HCT116 (cell line): ENCODE measurements at regions of chr17 and their contacts with region 1.

Region 1: GRCh38 chr17:78250891-78251794 is 19.7 kb downstream of the TMEM235 start:
- DNase-seq: peak; percentile 71
- ATAC-seq: peak; percentile 93
- H3K4me3 ChIP-seq: peak overlapping the region; percentile 22 to 42
- H3K27ac ChIP-seq: peak overlapping the region; percentile 24; the same call in 1 of the 2 replicates
- H3K4me1 ChIP-seq: peaks cover 5 to 14% of the 10 kb centered on the region in 2 experiments
- H3K27me3 ChIP-seq: no peaks in the 10 kb centered on the region
- CTCF ChIP-seq: peak; percentile 100
- POLR2A ChIP-seq: no peak
- RAD21 ChIP-seq: peak; percentile 100

Region 2: DNA sequence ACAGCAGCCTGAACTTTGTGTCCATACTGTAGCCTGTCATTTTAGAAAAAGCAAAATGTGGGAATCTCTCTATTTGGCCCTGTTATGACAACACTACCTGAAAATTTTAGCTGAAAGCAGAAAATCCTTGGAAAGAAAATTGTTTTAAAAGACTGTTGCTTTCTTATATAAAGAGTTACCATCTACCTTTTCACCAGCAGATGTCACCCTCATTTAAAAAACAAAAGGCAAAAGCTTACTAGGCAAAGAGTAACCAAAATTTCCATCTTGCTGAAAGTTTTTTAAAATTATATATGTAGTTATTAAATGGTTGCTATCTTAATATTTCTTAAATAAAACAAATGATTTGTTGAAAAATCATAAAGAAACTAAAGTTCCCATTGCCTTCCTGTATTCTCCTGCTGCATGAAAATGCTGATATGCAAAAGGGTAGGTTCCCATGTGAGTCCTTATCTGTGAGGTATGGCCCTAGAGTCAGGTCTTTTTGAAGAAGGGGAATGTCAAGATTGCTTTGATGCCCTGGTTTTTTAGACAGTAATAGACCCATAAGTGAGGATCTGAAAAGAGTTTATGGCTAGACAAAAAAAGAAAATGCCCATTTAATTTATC is 231.7 kb before region 1 on chr17:
- CTCF ChIA-PET with region 1: interaction called, 21 read pairs
- POLR2A ChIA-PET with region 1: no interaction called
- RAD21 ChIA-PET with region 1: interaction called in 1 of 2 experiments, 5 read pairs
- intact Hi-C with region 1: no loop called
- DNase-seq: peak; percentile 33
- ATAC-seq: peak; percentile 71; the same call in 1 of the 2 replicates
- H3K4me3 ChIP-seq: no peak overlapping the region
- H3K27ac ChIP-seq: no peak overlapping the region
- H3K4me1 ChIP-seq: no peaks in the 10 kb centered on the region
- H3K27me3 ChIP-seq: no peaks in the 10 kb centered on the region
- CTCF ChIP-seq: peak; percentile 58 to 82 (median 65); a peak in 5 of 6 replicates
- POLR2A ChIP-seq: no peak
- RAD21 ChIP-seq: peak; percentile 83

Region 3: GRCh38 chr17:78112518-78113226 is 138.5 kb before region 1 on chr17:
- CTCF ChIA-PET with region 1: interaction called, 11 read pairs
- POLR2A ChIA-PET with region 1: no interaction called
- RAD21 ChIA-PET with region 1: interaction called in 1 of 2 experiments, 6 read pairs
- intact Hi-C with region 1: loop called (anchors 1 kb)
- DNase-seq: peak; percentile 33
- ATAC-seq: peak; percentile 93
- H3K4me3 ChIP-seq: no peak overlapping the region
- H3K27ac ChIP-seq: no peak overlapping the region; the same call in 1 of the 2 replicates
- H3K4me1 ChIP-seq: peaks cover 0 to 4% of the 10 kb centered on the region in 2 experiments; a peak in 1 of 4 replicates
- H3K27me3 ChIP-seq: no peaks in the 10 kb centered on the region
- CTCF ChIP-seq: peak; percentile 97 to 100 (median 100)
- POLR2A ChIP-seq: no peak
- RAD21 ChIP-seq: peak; percentile 99

Region 4: DNA sequence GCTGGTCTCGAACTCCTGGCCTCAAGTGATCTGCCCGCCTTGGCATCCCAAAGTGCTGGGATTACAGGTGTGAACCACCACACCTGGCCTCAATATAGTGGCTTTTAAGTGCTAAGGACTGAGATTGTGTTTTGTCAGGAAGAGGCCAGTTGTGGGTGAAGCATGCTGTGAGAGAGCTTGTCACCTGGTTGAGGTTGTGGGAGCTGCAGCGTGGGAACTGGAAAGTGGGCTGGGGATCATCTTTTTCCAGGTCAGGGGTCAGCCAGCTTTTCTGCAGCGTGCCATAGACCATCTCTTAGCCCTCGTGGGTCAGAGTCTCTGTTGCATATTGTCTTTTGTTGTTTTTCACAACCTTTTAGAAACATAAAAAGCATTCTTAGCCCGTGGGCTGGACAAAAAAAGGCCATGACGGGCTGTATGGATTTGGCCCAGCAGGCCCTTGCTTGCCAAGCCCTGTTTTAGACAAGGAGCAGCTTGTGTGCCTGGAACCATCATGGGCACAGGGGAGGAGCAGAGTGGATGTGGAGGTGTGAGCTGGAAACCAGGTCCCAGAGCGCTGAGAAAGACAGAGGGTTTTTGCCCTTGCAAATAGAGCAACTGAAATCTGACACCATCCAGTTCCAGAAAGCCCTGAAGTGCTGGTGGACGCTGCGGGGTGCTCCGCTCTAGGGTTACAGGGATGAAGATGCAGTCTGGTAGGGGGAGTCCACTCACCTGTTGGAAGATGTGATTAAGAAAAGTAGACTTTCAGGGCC is 31.6 kb before region 1 on chr17:
- CTCF ChIA-PET with region 1: no interaction called
- POLR2A ChIA-PET with region 1: no interaction called
- RAD21 ChIA-PET with region 1: no interaction called
- intact Hi-C with region 1: no loop called
- DNase-seq: no peak
- ATAC-seq: no peak
- H3K4me3 ChIP-seq: no peak overlapping the region
- H3K27ac ChIP-seq: no peak overlapping the region
- H3K4me1 ChIP-seq: peaks cover 8 to 11% of the 10 kb centered on the region in 2 experiments; a peak in 3 of 4 replicates
- H3K27me3 ChIP-seq: no peaks in the 10 kb centered on the region
- CTCF ChIP-seq: no peak
- POLR2A ChIP-seq: no peak
- RAD21 ChIP-seq: no peak

Region 5: GRCh38 chr17:78237401-78238012 is 13.6 kb before region 1 on chr17:
- CTCF ChIA-PET with region 1: interaction called, 11 read pairs
- POLR2A ChIA-PET with region 1: no interaction called
- RAD21 ChIA-PET with region 1: no interaction called
- intact Hi-C with region 1: no loop called
- DNase-seq: no peak
- ATAC-seq: no peak
- H3K4me3 ChIP-seq: no peak overlapping the region
- H3K27ac ChIP-seq: no peak overlapping the region
- H3K4me1 ChIP-seq: peaks cover 0 to 9% of the 10 kb centered on the region in 2 experiments; a peak in 1 of 4 replicates
- H3K27me3 ChIP-seq: no peaks in the 10 kb centered on the region
- CTCF ChIP-seq: no peak
- POLR2A ChIP-seq: no peak
- RAD21 ChIP-seq: no peak

Region 6: DNA sequence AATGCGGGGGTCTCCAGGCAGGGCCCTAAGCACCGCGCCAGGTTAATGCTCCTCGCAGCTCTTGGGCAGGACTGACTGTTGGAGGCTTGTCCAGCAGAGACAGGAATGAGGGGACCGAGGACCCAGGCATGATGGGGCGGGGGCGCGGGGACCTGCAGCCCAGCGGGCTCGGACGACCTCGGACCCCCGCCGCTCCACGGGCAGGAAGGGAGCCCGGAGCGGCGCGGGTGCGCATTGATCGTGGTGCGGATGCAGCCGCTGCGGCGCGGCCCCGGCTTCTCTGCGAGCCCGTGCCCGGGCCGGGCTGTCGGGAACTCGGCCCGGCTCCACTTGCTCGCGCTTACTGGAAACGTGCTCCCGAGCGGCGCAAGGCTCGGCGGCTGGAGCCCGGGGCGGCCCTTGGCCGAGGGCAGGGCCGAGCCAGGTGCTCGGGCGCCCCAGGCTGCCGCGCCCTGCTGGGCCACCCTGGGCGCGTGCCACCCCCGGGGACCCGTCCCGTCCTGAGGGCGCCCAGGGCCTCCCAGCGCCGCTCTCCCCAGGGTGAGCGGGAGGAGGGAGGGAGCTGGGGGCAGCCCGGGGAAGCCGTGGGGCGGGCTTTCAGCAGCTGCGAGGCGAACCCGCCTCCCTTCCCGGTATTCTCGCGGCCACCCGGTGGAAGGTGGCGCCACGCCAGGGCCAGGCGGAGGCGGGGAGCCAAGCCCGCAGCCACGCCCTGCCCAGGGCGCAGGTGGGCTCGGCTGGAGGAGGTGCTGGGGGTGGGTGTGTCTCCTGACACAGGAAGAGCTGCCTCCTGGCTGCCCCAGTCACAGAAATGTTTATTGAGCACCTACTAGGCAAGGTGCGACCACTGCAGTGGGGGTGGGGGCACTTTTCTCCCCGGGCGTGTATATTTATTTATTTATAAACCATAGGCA is 62.8 kb after region 1 on chr17:
- CTCF ChIA-PET with region 1: interaction called, 15 read pairs
- POLR2A ChIA-PET with region 1: no interaction called
- RAD21 ChIA-PET with region 1: interaction called in 1 of 2 experiments, 3 read pairs
- intact Hi-C with region 1: no loop called
- DNase-seq: peak; percentile 92
- ATAC-seq: peak; percentile 74
- H3K4me3 ChIP-seq: peak overlapping the region; percentile 32 to 57
- H3K27ac ChIP-seq: peak overlapping the region; percentile 99
- H3K4me1 ChIP-seq: peaks cover 52 to 83% of the 10 kb centered on the region in 2 experiments
- H3K27me3 ChIP-seq: no peaks in the 10 kb centered on the region
- CTCF ChIP-seq: no peak
- POLR2A ChIP-seq: peak; percentile 93
- RAD21 ChIP-seq: no peak

Region 7: GRCh38 chr17:78421484-78422266 is 170.5 kb after region 1 on chr17:
- CTCF ChIA-PET with region 1: interaction called, 61 read pairs
- POLR2A ChIA-PET with region 1: no interaction called
- RAD21 ChIA-PET with region 1: interaction called, 9 to 12 read pairs
- intact Hi-C with region 1: loop called (anchors 1 kb)
- DNase-seq: peak; percentile 51
- ATAC-seq: peak; percentile 95
- H3K4me3 ChIP-seq: no peak overlapping the region
- H3K27ac ChIP-seq: no peak overlapping the region
- H3K4me1 ChIP-seq: no peaks in the 10 kb centered on the region
- H3K27me3 ChIP-seq: no peaks in the 10 kb centered on the region
- CTCF ChIP-seq: peak; percentile 98 to 100 (median 100)
- POLR2A ChIP-seq: no peak
- RAD21 ChIP-seq: peak; percentile 98